Activated CD4-positive, alpha-beta T cell treated with anti-CD3 and anti-CD28 coated beads for 36 hours (primary cell): ENCODE measurements at regions of chr5 and their contacts with region 1.

Region 1: DNA sequence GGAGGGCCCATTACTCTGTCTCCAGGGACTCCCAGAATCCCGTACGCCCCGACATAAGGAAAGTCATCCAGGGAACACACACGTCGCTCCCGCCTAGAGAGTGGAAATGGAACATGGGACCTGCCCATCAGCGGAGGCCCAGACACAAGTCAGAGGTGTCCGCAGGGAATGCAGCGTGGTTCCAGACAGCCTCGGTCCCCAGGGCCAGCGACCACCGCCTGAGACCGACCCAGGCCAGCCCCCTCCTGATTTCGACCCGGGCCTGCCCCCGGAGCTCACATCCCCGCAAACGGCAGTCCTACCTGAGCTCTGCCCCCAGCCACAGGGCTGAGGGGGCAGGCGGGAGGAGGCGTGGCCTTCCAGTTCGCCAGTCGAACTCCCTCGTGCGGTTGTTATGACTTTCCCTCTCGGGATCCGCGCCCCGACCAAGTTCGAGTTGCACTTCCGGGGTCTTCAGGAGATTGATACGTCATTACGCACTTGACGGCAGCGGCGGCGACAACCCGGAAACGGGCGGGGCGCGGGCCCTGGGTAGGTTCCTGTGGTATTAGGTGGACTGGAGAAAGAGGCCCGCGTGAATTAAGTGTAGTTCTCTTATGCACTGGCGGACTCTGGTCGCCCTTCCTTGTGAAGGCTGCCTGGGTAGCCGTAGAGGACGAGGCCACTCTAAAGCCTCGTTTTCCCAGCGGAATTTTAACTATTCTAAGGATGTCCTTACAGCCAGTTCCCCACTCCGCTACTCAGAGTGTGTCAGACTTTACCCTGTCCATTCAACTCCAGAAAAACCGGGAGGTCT is 370.0 kb upstream of the POU5F2 start:
- DNase-seq: peak; percentile 96
- ATAC-seq: peak; percentile 97
- H3K4me3 Mint-ChIP-seq: peak overlapping the region; percentile 91
- H3K27ac Mint-ChIP-seq: peak overlapping the region; percentile 93
- H3K4me1 Mint-ChIP-seq: peaks cover 39% of the 10 kb centered on the region
- H3K27me3 Mint-ChIP-seq: no peaks in the 10 kb centered on the region

Region 2: GRCh38 chr5:93620487-93621326 is 490.7 kb before region 1 on chr5:
- CTCF ChIA-PET with region 1: no interaction called
- POLR2A ChIA-PET with region 1: no interaction called
- intact Hi-C with region 1: loop called (anchors 2 to 5 kb)
- DNase-seq: peak; percentile 77
- ATAC-seq: peak; percentile 82
- H3K4me3 Mint-ChIP-seq: peak overlapping the region; percentile 78
- H3K27ac Mint-ChIP-seq: peak overlapping the region; percentile 62
- H3K4me1 Mint-ChIP-seq: peaks cover 28% of the 10 kb centered on the region
- H3K27me3 Mint-ChIP-seq: peaks cover 18% of the 10 kb centered on the region

Region 3: DNA sequence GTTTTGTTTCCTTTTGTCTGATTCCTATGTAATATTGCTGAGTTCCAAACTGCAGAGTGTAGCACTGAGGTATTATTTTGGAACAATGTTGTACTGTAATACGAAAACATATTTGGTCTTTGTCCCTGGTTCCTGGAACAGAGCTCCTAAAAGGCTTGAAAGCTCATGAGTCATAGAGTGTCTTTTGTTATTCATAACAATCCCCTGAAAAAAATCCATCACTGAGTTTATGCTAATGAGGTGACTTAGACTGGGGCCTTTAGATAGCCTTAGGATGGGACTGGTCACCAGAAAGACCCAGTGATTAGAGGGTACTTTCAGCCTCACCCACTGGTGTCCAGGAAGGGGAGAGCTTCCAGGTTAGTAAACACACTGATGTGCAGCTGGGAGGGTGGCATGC is 237.3 kb before region 1 on chr5:
- CTCF ChIA-PET with region 1: no interaction called
- POLR2A ChIA-PET with region 1: no interaction called
- intact Hi-C with region 1: loop called in 1 of 2 experiments (anchors 1 kb)
- DNase-seq: peak; percentile 7
- ATAC-seq: peak; percentile 89
- H3K4me3 Mint-ChIP-seq: no peak overlapping the region
- H3K27ac Mint-ChIP-seq: peak overlapping the region; percentile 58
- H3K4me1 Mint-ChIP-seq: peaks cover 12% of the 10 kb centered on the region
- H3K27me3 Mint-ChIP-seq: no peaks in the 10 kb centered on the region

Region 4: DNA sequence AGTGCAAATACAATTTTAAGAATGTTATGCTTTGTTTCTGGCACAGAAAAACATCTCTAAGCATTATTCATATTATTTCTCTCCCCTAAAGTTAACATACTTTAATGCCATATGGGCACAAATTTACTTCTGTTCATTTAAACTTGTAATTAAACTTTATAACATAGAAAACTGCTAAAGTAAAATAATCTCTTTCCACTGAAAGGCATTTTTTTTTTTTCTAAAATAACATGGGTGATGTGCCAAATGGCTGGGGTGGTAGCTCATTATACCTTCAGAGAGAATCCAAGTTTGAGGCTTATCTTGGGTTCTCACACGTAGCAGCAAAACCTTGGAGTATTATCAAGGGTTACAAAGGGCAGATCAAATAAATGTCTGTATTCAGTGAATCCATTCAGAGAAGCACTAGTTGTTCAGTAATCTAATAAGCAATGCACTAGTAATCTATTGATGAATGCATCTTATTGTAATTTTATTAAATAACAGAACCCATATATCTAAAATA is 112.4 kb before region 1 on chr5:
- CTCF ChIA-PET with region 1: no interaction called
- POLR2A ChIA-PET with region 1: no interaction called
- intact Hi-C with region 1: no loop called
- DNase-seq: no peak
- ATAC-seq: no peak
- H3K4me3 Mint-ChIP-seq: no peak overlapping the region
- H3K27ac Mint-ChIP-seq: no peak overlapping the region
- H3K4me1 Mint-ChIP-seq: peaks cover 12% of the 10 kb centered on the region
- H3K27me3 Mint-ChIP-seq: no peaks in the 10 kb centered on the region